ENCODE measurements at regions of chr10 and their contacts with region 1.

Region 1: DNA sequence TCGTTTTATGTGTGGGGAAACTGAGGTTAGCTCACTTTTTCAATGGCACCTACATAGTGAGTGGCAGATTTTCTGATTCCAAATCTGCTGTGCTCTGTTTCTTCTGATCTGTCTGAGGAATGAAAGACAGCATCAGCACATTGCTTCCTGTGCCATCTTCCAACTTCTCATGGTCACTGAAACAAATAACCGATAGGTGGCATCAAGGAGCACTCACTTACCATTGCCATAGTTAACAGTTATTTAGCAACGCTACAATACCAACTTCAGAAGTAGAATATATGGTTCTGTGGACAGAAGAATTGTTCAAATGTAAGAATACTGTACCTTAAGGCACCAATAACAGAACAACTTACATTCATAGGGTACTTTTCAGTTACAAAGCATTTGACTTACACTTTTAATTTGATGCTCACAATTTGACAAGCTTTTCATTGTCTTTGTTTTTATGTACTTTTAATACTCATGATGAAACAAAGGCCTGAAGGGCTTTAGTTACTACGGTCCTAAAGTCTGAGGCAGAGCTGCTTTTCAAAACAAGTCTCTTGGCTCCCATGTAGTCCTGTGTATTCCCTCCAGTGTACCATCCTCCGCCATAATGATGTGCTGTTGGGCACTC is 228.9 kb upstream of the TCF7L2 start:
- DNase-seq: peak in 2 of 9 experiments; percentile 47 to 59
- ATAC-seq: no peak
- H3K4me3 ChIP-seq: no peak overlapping the region
- H3K4me3 Mint-ChIP-seq: no peak overlapping the region
- H3K27ac ChIP-seq: no peak overlapping the region
- H3K27ac Mint-ChIP-seq: no peak overlapping the region
- H3K4me1 ChIP-seq: no peaks in the 10 kb centered on the region
- H3K4me1 Mint-ChIP-seq: no peaks in the 10 kb centered on the region
- H3K27me3 ChIP-seq: no peaks in the 10 kb centered on the region
- H3K27me3 Mint-ChIP-seq: no peaks in the 10 kb centered on the region
- CTCF ChIP-seq: peak; percentile 59

Region 2: GRCh38 chr10:113108212-113108835 is 387.1 kb after region 1 on chr10:
- CTCF ChIA-PET with region 1: no interaction called
- POLR2A ChIA-PET with region 1: no interaction called
- intact Hi-C with region 1: loop called in 1 of 2 experiments (anchors 5 kb)
- DNase-seq: peak in 4 of 9 experiments; percentile 17 to 36 (median 29)
- ATAC-seq: peak; percentile 49
- H3K4me3 ChIP-seq: no peak overlapping the region
- H3K4me3 Mint-ChIP-seq: no peak overlapping the region
- H3K27ac ChIP-seq: no peak overlapping the region
- H3K27ac Mint-ChIP-seq: no peak overlapping the region
- H3K4me1 ChIP-seq: no peaks in the 10 kb centered on the region
- H3K4me1 Mint-ChIP-seq: peaks cover 2% of the 10 kb centered on the region
- H3K27me3 ChIP-seq: no peaks in the 10 kb centered on the region
- H3K27me3 Mint-ChIP-seq: no peaks in the 10 kb centered on the region
- CTCF ChIP-seq: peak; percentile 59

Region 3: DNA sequence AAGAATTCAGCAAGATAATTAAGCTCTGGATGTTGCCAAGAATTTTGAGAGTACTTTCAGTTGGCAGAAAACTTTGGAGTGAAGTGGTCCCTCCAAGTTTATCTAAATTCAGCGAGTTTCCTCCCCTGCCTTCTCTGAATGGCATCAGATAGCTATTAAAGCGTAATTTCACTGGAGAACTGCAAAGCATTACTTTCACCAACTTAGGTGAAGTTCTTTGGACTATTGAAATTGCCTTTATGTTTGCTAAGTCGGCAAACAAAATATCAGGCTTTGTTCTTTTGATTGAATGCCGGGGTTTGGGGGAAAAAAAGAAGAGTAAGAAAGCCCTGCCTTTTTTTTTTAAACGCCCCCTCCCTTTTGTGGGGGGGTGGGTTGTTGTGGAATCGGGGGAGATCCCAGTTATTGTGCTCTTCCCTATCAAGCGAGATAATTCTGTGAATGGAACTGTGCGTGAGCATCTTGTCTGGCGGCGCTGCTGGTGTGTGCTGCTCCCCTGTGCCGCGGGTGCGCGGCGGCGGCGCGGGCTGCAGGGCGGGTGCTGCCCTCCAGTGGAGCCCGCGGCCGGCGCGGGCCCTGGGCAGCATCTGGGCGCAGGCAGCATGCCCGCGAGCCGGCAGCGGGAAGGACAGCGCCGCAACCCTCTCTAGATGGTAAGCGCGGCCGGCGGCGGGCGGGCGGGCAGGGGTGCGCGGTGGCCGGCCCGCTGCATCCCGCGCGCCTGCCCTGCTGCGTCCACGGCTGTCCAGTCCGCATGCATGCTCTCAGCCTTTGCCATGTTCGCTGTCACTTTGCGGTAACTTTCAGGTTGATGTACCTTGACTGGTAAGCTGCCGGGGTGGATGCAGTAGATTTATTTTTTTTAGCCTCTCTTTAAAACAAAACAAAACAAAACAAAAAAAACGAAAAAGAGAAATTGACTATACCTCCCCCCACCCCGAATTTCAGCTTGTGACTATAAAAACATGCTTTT is 405.3 kb after region 1 on chr10:
- CTCF ChIA-PET with region 1: interaction called, 11 read pairs
- POLR2A ChIA-PET with region 1: no interaction called
- intact Hi-C with region 1: loop called (anchors 1 kb)
- DNase-seq: peak; percentile 7 to 70 (median 45)
- ATAC-seq: peak; percentile 91
- H3K4me3 ChIP-seq: no peak overlapping the region
- H3K4me3 Mint-ChIP-seq: peak overlapping the region; percentile 57
- H3K27ac ChIP-seq: no peak overlapping the region
- H3K27ac Mint-ChIP-seq: no peak overlapping the region
- H3K4me1 ChIP-seq: peaks cover 5% of the 10 kb centered on the region
- H3K4me1 Mint-ChIP-seq: peaks cover 6% of the 10 kb centered on the region
- H3K27me3 ChIP-seq: peaks cover 0 to 2% of the 10 kb centered on the region in 2 experiments
- H3K27me3 Mint-ChIP-seq: peaks cover 25% of the 10 kb centered on the region
- CTCF ChIP-seq: peak; percentile 49

Region 4: DNA sequence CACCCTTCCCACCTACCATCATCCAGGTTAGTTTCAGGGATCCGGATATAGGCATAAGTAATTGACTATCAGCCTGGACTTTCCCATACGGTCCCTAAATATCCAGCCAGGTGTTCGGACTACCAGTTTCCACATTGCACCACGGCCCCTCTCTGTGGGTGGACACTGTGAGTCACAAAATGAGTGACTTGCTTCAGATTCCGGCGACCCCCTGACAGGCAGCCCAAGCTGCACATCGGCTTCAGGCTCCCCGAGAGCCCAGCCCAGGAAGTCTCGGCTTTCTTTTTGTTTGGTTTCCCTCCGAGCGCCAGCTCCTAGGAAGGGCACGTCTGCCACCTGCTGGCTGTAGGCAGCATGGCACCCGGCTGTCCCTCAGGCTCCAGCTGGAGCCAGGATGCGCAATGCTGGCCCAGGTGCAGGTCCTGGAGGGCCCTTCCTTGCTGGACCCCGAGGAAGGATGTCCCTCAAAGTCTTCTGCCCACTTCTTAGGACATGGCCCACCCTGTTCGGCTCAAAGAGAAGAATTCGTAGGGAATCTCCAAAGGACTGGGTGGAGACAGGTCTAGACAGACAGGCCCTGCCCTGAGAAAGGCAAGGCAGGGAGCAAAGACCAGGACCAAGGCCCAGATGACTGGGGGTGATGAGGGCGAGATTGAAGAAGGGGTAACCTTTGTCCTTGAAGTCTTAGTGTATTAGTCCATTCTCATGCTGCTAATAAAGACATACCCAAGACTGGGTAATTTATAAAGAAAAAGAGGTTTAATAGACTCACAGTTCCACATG is 842.3 kb after region 1 on chr10:
- CTCF ChIA-PET with region 1: no interaction called
- POLR2A ChIA-PET with region 1: no interaction called
- intact Hi-C with region 1: loop called in 1 of 2 experiments (anchors 10 kb)
- DNase-seq: peak; percentile 42 to 74 (median 59)
- ATAC-seq: peak; percentile 92
- H3K4me3 ChIP-seq: peak overlapping the region; percentile 18 to 20
- H3K4me3 Mint-ChIP-seq: peak overlapping the region; percentile 80
- H3K27ac ChIP-seq: no peak overlapping the region
- H3K27ac Mint-ChIP-seq: no peak overlapping the region
- H3K4me1 ChIP-seq: peaks cover 5% of the 10 kb centered on the region
- H3K4me1 Mint-ChIP-seq: peaks cover 4% of the 10 kb centered on the region
- H3K27me3 ChIP-seq: no peaks in the 10 kb centered on the region
- H3K27me3 Mint-ChIP-seq: peaks cover 5% of the 10 kb centered on the region
- CTCF ChIP-seq: peak; percentile 93

Measured in CD8-positive, alpha-beta T cell (primary cell).